ENCODE measurements at regions of chr15 and their contacts with region 1.

Region 1: GRCh38 chr15:84588053-84588874 is 12.5 kb upstream of the ZSCAN2 start:
- DNase-seq: peak; percentile 79
- ATAC-seq: peak; percentile 100
- H3K4me3 Mint-ChIP-seq: peak overlapping the region; percentile 72
- H3K27ac Mint-ChIP-seq: no peak overlapping the region
- H3K4me1 Mint-ChIP-seq: peaks cover 4% of the 10 kb centered on the region
- H3K27me3 Mint-ChIP-seq: peaks cover 3% of the 10 kb centered on the region
- CTCF ChIP-seq: peak; percentile 39

Region 2: DNA sequence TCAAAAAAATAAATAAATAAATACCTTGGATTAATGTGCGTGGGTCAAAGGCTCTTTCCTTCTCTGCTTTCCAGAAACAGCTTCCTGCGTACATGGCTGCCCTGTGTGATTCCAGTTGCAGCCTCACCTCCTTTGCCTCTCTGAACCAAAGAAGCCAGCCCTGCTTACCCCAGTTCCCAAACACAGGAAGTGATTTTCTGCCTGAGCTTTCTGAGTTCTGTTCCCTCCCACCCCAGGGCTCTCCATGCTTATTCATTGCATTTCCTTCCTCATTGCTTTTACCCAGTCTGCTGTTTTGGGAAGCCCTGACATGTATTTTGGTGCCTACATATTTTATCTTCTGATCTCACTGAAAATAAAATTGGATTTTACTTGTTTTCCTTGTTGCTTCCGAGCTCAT is 28.0 kb after region 1 on chr15:
- CTCF ChIA-PET with region 1: no interaction called
- POLR2A ChIA-PET with region 1: no interaction called
- intact Hi-C with region 1: no loop called
- DNase-seq: no peak
- ATAC-seq: no peak
- H3K4me3 Mint-ChIP-seq: no peak overlapping the region
- H3K27ac Mint-ChIP-seq: no peak overlapping the region
- H3K4me1 Mint-ChIP-seq: peaks cover 4% of the 10 kb centered on the region
- H3K27me3 Mint-ChIP-seq: no peaks in the 10 kb centered on the region
- CTCF ChIP-seq: no peak

Region 3: DNA sequence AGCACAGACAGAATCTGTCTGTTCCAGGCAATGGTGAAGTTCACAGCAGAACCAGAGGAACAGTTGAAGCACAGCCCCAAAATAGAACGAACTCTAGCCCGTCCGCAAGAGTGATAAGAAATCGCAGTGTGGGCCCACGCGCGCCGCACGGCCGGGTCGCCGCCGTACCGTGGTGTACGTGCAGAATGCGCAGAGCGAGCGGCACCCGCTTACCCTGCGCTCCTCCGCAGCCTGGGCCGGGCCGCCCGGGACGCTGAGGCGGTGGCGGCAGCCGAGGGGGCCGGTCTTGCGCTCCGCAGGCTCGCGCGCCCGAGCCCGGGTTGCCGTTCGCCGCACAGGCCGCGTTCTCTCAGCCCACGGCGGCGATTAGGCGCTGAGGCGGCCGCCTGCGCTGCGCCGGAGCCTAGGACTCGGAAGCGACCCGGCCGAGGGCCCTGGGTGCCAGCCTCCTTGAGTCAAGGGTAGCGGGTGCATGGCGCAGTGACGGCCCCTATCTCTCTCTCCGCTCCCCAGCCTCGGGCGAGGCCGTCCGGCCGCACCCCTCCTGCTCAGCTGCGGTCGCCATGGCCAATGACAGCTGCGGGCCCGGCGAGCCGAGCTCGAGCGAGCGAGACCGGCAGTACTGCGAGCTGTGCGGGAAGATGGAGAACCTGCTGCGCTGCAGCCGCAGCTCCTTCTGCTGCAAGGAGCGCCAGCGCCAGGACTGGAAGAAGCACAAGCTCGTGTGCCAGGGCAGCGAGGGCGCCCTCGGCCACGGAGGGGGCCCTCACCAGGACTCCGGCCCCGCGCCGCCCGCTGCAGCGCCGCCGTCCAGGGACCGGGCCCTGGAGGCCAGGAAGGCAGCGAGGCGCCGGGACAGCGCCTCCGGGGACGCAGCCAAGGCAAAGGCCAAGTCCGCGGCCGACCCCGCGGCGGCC is 45.3 kb after region 1 on chr15:
- CTCF ChIA-PET with region 1: interaction called, 4 read pairs
- POLR2A ChIA-PET with region 1: interaction called, 6 read pairs
- intact Hi-C with region 1: loop called (anchors 1 kb)
- DNase-seq: peak; percentile 67
- ATAC-seq: peak; percentile 45
- H3K4me3 Mint-ChIP-seq: peak overlapping the region; percentile 91
- H3K27ac Mint-ChIP-seq: peak overlapping the region; percentile 87
- H3K4me1 Mint-ChIP-seq: peaks cover 50% of the 10 kb centered on the region
- H3K27me3 Mint-ChIP-seq: no peaks in the 10 kb centered on the region
- CTCF ChIP-seq: no peak

Region 4: GRCh38 chr15:84883433-84883832 is 295.2 kb after region 1 on chr15:
- CTCF ChIA-PET with region 1: interaction called, 22 read pairs
- POLR2A ChIA-PET with region 1: no interaction called
- intact Hi-C with region 1: loop called (anchors 1 kb)
- DNase-seq: no peak
- ATAC-seq: no peak
- H3K4me3 Mint-ChIP-seq: no peak overlapping the region
- H3K27ac Mint-ChIP-seq: no peak overlapping the region
- H3K4me1 Mint-ChIP-seq: no peaks in the 10 kb centered on the region
- H3K27me3 Mint-ChIP-seq: peaks cover 5% of the 10 kb centered on the region
- CTCF ChIP-seq: no peak

Region 5: DNA sequence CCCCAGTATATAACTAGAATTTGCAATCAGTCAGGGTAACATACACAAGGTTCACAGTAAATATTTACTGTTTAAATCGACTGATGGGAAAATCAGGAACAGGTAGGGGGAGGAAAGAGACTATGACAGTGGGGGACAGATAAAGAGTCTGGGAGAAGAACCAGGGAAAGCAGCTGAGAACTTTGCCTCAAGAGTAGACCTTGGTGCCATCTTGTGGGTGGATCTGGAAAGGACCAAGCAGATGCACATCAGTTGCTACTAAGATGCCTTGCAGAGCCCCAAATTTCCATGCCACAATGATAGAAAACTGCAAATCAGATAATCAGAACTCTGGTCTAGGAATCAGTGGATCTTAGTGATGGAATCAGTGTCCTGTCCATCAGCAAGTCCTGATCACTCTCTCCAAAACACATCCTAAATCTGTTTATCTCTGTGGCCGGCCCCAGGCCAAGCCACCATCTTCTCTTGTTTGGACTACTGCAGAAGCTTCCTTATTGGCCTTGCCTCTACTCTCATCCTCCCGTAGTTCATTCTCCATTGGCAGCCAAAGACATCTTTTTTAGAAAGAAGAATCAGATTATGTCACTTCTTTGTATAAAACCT is 456.1 kb after region 1 on chr15:
- CTCF ChIA-PET with region 1: no interaction called
- POLR2A ChIA-PET with region 1: no interaction called
- intact Hi-C with region 1: loop called (anchors 1 kb)
- DNase-seq: no peak
- ATAC-seq: peak; percentile 56
- H3K4me3 Mint-ChIP-seq: no peak overlapping the region
- H3K27ac Mint-ChIP-seq: no peak overlapping the region
- H3K4me1 Mint-ChIP-seq: peaks cover 31% of the 10 kb centered on the region
- H3K27me3 Mint-ChIP-seq: no peaks in the 10 kb centered on the region
- CTCF ChIP-seq: no peak

Region 6: GRCh38 chr15:85289677-85290365 is 701.6 kb after region 1 on chr15:
- CTCF ChIA-PET with region 1: no interaction called
- POLR2A ChIA-PET with region 1: no interaction called
- intact Hi-C with region 1: loop called (anchors 1 kb)
- DNase-seq: no peak
- ATAC-seq: peak; percentile 42
- H3K4me3 Mint-ChIP-seq: no peak overlapping the region
- H3K27ac Mint-ChIP-seq: no peak overlapping the region
- H3K4me1 Mint-ChIP-seq: peaks cover 10% of the 10 kb centered on the region
- H3K27me3 Mint-ChIP-seq: peaks cover 9% of the 10 kb centered on the region
- CTCF ChIP-seq: no peak

Measured in activated B cell treated with CpG ODN at 0.5 μM for 24 hours (primary cell).